B cell (primary cell): ENCODE measurements at regions of chr17 and their contacts with region 1.

Region 1: GRCh38 chr17:79045842-79046196 is 21.9 kb downstream of the C1QTNF1 start:
- DNase-seq: peak; percentile 71
- ATAC-seq: peak; percentile 82
- H3K4me3 ChIP-seq: no peak overlapping the region
- H3K4me3 Mint-ChIP-seq: no peak overlapping the region
- H3K27ac ChIP-seq: no peak overlapping the region
- H3K27ac Mint-ChIP-seq: no peak overlapping the region
- H3K4me1 ChIP-seq: no peaks in the 10 kb centered on the region
- H3K4me1 Mint-ChIP-seq: peaks cover 1% of the 10 kb centered on the region
- H3K27me3 ChIP-seq: peaks cover 0 to 19% (median 0%) of the 10 kb centered on the region in 4 experiments
- H3K27me3 Mint-ChIP-seq: peaks cover 24% of the 10 kb centered on the region
- CTCF ChIP-seq: peak; percentile 88

Region 2: GRCh38 chr17:78993241-78993956 is 52.4 kb before region 1 on chr17:
- CTCF ChIA-PET with region 1: interaction called, 4 read pairs
- POLR2A ChIA-PET with region 1: no interaction called
- intact Hi-C with region 1: loop called (anchors 10 kb)
- DNase-seq: peak; percentile 62
- ATAC-seq: peak; percentile 65
- H3K4me3 ChIP-seq: no peak overlapping the region
- H3K4me3 Mint-ChIP-seq: no peak overlapping the region
- H3K27ac ChIP-seq: no peak overlapping the region
- H3K27ac Mint-ChIP-seq: no peak overlapping the region
- H3K4me1 ChIP-seq: no peaks in the 10 kb centered on the region
- H3K4me1 Mint-ChIP-seq: peaks cover 3% of the 10 kb centered on the region
- H3K27me3 ChIP-seq: no peaks in the 10 kb centered on the region
- H3K27me3 Mint-ChIP-seq: no peaks in the 10 kb centered on the region
- CTCF ChIP-seq: peak; percentile 85

Region 3: GRCh38 chr17:79082311-79083190 is 36.7 kb after region 1 on chr17:
- CTCF ChIA-PET with region 1: interaction called, 9 read pairs
- POLR2A ChIA-PET with region 1: no interaction called
- intact Hi-C with region 1: loop called (anchors 5 kb)
- DNase-seq: peak; percentile 63
- ATAC-seq: peak; percentile 56
- H3K4me3 ChIP-seq: no peak overlapping the region
- H3K4me3 Mint-ChIP-seq: no peak overlapping the region
- H3K27ac ChIP-seq: no peak overlapping the region
- H3K27ac Mint-ChIP-seq: no peak overlapping the region
- H3K4me1 ChIP-seq: no peaks in the 10 kb centered on the region
- H3K4me1 Mint-ChIP-seq: no peaks in the 10 kb centered on the region
- H3K27me3 ChIP-seq: no peaks in the 10 kb centered on the region
- H3K27me3 Mint-ChIP-seq: no peaks in the 10 kb centered on the region
- CTCF ChIP-seq: peak; percentile 78

Region 4: GRCh38 chr17:79174905-79175856 is 129.4 kb after region 1 on chr17:
- CTCF ChIA-PET with region 1: no interaction called
- POLR2A ChIA-PET with region 1: no interaction called
- intact Hi-C with region 1: no loop called
- DNase-seq: no peak
- ATAC-seq: no peak
- H3K4me3 ChIP-seq: no peak overlapping the region
- H3K4me3 Mint-ChIP-seq: no peak overlapping the region
- H3K27ac ChIP-seq: no peak overlapping the region
- H3K27ac Mint-ChIP-seq: no peak overlapping the region
- H3K4me1 ChIP-seq: no peaks in the 10 kb centered on the region
- H3K4me1 Mint-ChIP-seq: no peaks in the 10 kb centered on the region
- H3K27me3 ChIP-seq: no peaks in the 10 kb centered on the region
- H3K27me3 Mint-ChIP-seq: peaks cover 3% of the 10 kb centered on the region
- CTCF ChIP-seq: no peak